ENCODE measurements at regions of chr18 and their contacts with region 1.

Region 1: GRCh38 chr18:1663879-1664705 is 759.4 kb downstream of the ADCYAP1 start:
- DNase-seq: no peak
- ATAC-seq: peak; percentile 79
- H3K4me3 ChIP-seq: no peak overlapping the region
- H3K27ac ChIP-seq: no peak overlapping the region
- H3K4me1 ChIP-seq: no peaks in the 10 kb centered on the region
- H3K27me3 ChIP-seq: no peaks in the 10 kb centered on the region
- CTCF ChIP-seq: peak; percentile 48 to 76 (median 53)
- EP300 ChIP-seq: no peak
- POLR2A ChIP-seq: no peak
- RAD21 ChIP-seq: peak; percentile 20; the same call in 1 of the 2 replicates

Region 2: GRCh38 chr18:995629-996028 is 668.5 kb before region 1 on chr18:
- CTCF ChIA-PET with region 1: no interaction called
- POLR2A ChIA-PET with region 1: interaction called, 10 read pairs
- RAD21 ChIA-PET with region 1: no interaction called
- SMC1A ChIA-PET with region 1: no interaction called
- in situ Hi-C with region 1: no loop called
- intact Hi-C with region 1: no loop called
- DNase-seq: no peak
- ATAC-seq: no peak
- H3K4me3 ChIP-seq: no peak overlapping the region
- H3K27ac ChIP-seq: no peak overlapping the region
- H3K4me1 ChIP-seq: no peaks in the 10 kb centered on the region
- H3K27me3 ChIP-seq: no peaks in the 10 kb centered on the region
- CTCF ChIP-seq: no peak
- EP300 ChIP-seq: no peak
- POLR2A ChIP-seq: no peak
- RAD21 ChIP-seq: no peak

Region 3: GRCh38 chr18:1648712-1649111 is 15.4 kb before region 1 on chr18:
- CTCF ChIA-PET with region 1: interaction called, 11 read pairs
- POLR2A ChIA-PET with region 1: no interaction called
- RAD21 ChIA-PET with region 1: no interaction called
- SMC1A ChIA-PET with region 1: interaction called, 3 read pairs
- in situ Hi-C with region 1: no loop called
- intact Hi-C with region 1: no loop called
- DNase-seq: no peak
- ATAC-seq: no peak
- H3K4me3 ChIP-seq: no peak overlapping the region
- H3K27ac ChIP-seq: no peak overlapping the region
- H3K4me1 ChIP-seq: no peaks in the 10 kb centered on the region
- H3K27me3 ChIP-seq: no peaks in the 10 kb centered on the region
- CTCF ChIP-seq: no peak
- EP300 ChIP-seq: no peak
- POLR2A ChIP-seq: no peak
- RAD21 ChIP-seq: no peak

Region 4: DNA sequence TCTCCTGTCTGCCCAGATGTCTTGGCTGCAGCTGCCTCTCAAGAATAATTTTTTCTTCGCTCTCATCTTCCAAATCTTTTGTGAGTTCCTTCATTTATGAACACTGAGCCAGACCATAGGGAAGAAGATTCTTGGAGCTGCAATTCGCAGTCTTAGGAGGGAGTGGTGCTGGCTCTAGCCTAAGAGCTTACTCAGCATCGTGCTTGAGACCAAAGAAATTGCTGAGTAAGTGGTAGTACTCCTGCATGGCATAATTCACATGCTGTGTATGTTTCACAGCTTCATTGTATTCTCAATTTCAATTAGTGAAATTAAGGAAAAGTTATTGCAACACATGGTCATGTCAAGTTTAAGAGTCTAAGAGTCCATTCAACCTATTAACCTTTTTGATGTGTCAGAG is 12.3 kb after region 1 on chr18:
- CTCF ChIA-PET with region 1: interaction called, 11 read pairs
- POLR2A ChIA-PET with region 1: no interaction called
- RAD21 ChIA-PET with region 1: no interaction called
- SMC1A ChIA-PET with region 1: no interaction called
- in situ Hi-C with region 1: no loop called
- intact Hi-C with region 1: no loop called
- DNase-seq: no peak
- ATAC-seq: no peak
- H3K4me3 ChIP-seq: no peak overlapping the region
- H3K27ac ChIP-seq: no peak overlapping the region
- H3K4me1 ChIP-seq: no peaks in the 10 kb centered on the region
- H3K27me3 ChIP-seq: no peaks in the 10 kb centered on the region
- CTCF ChIP-seq: no peak
- EP300 ChIP-seq: no peak
- POLR2A ChIP-seq: no peak
- RAD21 ChIP-seq: no peak